Activated T-helper 2 cell treated with anti-CD3 and anti-CD28 coated beads, Interferon-gamma antibody, Interleukin-2, Interleukin-4, amounts not matched to agents 10 μg/mL and 5 μg/mL and 100 μg/mL, durations not matched to agents 14 hours and 24 hours and 36 hours (primary cell): ENCODE measurements at regions of chr6 and their contacts with region 1.

Region 1: DNA sequence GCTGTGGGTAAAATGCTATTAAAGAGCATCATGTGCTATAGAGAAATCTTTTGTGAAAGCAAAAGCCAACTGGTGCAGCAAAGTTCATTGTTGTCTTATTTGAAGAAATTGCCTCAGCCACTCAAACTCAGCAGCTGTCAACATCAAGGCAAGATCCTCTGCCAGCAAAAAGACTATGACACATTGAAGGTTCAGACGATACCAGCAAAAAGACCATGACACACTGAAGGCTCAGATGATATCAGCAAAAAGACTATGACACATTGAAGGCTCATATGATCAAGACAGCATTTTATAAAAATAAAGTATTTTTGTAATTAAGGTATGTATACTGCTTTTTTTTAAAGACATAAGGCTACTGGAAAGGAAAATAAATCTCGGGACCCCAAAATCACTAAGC is 118.4 kb upstream of the RUNX2 start:
- DNase-seq: no peak
- H3K4me3 Mint-ChIP-seq: no peak overlapping the region
- H3K27ac Mint-ChIP-seq: peak overlapping the region; percentile 47
- H3K4me1 Mint-ChIP-seq: peaks cover 50% of the 10 kb centered on the region
- H3K27me3 Mint-ChIP-seq: no peaks in the 10 kb centered on the region

Region 2: GRCh38 chr6:44932651-44933091 is 277.1 kb before region 1 on chr6:
- intact Hi-C with region 1: loop called (anchors 5 kb)
- DNase-seq: no peak
- H3K4me3 Mint-ChIP-seq: peak overlapping the region; percentile 78
- H3K27ac Mint-ChIP-seq: peak overlapping the region; percentile 93
- H3K4me1 Mint-ChIP-seq: peaks cover 48% of the 10 kb centered on the region
- H3K27me3 Mint-ChIP-seq: no peaks in the 10 kb centered on the region

Region 3: GRCh38 chr6:45116714-45117410 is 92.9 kb before region 1 on chr6:
- intact Hi-C with region 1: loop called (anchors 5 kb)
- DNase-seq: no peak
- H3K4me3 Mint-ChIP-seq: no peak overlapping the region
- H3K27ac Mint-ChIP-seq: peak overlapping the region; percentile 34
- H3K4me1 Mint-ChIP-seq: peaks cover 27% of the 10 kb centered on the region
- H3K27me3 Mint-ChIP-seq: no peaks in the 10 kb centered on the region

Region 4: DNA sequence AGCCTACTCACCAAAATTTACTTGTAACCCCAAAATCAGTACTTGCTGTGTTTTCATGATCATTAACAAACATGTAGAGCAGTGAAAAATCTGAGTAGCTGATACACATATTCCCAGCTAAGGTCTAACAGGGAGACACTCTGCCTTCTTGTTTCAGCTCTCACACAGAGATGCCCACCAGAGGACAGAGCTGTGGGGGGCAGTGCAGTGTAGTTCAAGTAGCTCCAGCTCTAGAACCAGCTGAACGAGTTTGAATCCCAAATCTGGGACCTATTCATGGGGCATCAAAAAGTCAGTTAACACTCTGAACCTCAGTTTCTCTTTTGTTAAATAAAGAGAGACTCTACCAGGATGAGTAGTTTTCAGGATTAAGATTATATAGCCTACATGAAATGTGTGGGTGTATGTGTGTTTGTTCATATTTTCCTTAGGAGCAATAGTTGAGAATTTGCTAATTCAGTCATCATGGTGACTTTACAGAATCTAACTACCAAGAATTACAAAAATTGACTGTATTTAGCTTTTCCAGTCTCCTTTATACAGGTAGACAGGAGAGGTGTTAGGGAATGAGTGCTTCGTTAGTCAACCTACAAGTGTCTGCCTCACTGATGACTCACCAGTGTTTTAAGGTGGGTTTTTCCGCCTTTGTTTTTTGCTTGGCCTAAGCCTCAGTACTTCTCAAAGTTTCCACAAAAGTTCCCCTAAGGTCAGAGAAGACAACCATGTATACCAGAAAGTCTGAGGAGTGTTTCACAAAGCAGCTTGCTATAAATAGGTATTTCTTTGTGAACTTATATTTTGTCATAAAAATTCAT is 45.6 kb before region 1 on chr6:
- intact Hi-C with region 1: loop called (anchors 2 kb)
- DNase-seq: no peak
- H3K4me3 Mint-ChIP-seq: no peak overlapping the region
- H3K27ac Mint-ChIP-seq: peak overlapping the region; percentile 81
- H3K4me1 Mint-ChIP-seq: peaks cover 46% of the 10 kb centered on the region
- H3K27me3 Mint-ChIP-seq: no peaks in the 10 kb centered on the region

Region 5: GRCh38 chr6:45226081-45226480 is 16.3 kb after region 1 on chr6:
- intact Hi-C with region 1: no loop called
- DNase-seq: no peak
- H3K4me3 Mint-ChIP-seq: no peak overlapping the region
- H3K27ac Mint-ChIP-seq: no peak overlapping the region
- H3K4me1 Mint-ChIP-seq: peaks cover 8% of the 10 kb centered on the region
- H3K27me3 Mint-ChIP-seq: no peaks in the 10 kb centered on the region

Region 6: DNA sequence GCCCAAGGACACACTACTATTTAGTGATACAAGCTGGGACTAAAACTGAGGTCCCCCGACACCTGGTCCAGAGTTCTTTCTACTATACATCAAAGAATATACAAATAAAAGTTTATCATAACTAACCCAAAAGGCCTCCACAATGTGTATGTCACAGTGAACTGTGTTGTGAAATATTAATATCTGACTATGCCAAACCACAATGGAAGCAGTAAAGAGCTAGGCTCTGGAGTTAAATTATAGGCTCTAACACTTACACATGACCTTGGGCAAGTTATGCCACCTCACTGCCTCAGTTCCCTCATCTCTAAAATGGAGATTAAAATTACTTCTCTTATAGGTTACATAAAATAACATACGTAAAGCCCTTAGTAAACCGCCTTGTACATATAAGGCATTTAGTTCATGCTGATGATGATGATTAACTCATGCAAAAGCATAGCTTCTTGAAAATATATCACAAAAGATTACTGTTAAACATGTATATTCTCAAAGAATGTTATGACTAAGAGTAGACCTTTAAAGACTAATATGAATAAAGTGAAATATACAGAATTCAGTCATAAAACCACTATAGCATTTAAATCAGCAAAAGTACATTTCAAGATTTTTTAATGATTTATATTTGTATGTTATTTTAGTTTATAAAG is 162.3 kb after region 1 on chr6:
- intact Hi-C with region 1: loop called (anchors 2 kb)
- DNase-seq: no peak
- H3K4me3 Mint-ChIP-seq: no peak overlapping the region
- H3K27ac Mint-ChIP-seq: peak overlapping the region; percentile 48
- H3K4me1 Mint-ChIP-seq: peaks cover 46% of the 10 kb centered on the region
- H3K27me3 Mint-ChIP-seq: no peaks in the 10 kb centered on the region